Gastrocnemius medialis (tissue), 4 donors: ENCODE measurements at regions of chr10 and their contacts with region 1.

Region 1: DNA sequence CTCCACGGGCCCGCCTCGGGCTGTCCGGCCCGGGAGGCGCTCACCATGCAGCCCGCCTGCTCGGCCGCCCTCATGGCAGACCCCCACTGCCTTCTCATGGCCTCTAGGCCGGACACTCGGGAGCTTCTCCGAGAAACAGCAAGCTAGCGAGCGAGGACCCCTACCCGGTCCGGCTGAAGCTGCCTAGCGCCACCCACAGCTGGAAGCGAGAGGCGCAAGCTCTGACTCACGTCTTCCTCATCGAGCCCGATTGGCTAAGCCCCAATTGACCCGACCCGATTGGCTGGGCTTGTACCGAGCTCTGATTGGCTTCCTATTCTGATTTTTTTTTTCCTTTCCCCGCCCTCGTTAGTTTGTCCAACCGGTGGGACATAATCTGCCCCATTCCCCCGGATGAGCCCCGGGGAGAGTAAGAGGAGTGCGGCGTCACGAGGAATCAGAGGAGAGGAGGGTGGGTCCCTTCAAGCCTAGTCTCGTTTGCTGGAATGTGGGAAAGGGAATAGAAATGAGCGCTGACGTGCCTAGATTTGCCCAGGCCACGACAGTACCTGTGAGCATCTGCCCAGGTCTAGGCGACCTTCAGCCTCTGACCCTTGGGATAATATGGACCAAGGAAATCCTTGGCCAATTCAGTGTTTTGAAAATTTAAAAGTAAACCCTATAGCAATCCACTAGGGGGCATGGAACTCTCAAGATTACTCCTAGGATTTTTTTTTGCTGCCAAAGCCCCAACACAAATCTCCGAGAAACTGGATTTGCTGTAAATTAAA is at the start of gene TYSND1:
- DNase-seq: peak; percentile 97
- ATAC-seq: peak; percentile 98
- H3K4me3 ChIP-seq: peak within 1 kb of the TSS; percentile 69 to 86 (median 76)
- H3K27ac ChIP-seq: peak within 1 kb of the TSS; percentile 82 to 94 (median 87)
- H3K4me1 ChIP-seq: peaks cover 16 to 18% of the 10 kb centered on the region in 2 donors
- H3K27me3 ChIP-seq: no peaks in the 10 kb centered on the region
- CTCF ChIP-seq: peak; percentile 58 to 81 (median 68)
- POLR2A ChIP-seq: peak; percentile 56 to 70
- total RNA-seq, gene TYSND1: 2.7 to 10.3 (median 4.7) TPM

Region 2: GRCh38 chr10:70115948-70116682 is 30.6 kb before region 1 on chr10:
- in situ Hi-C with region 1: no loop called
- intact Hi-C with region 1: loop called (anchors 1 kb)
- DNase-seq: peak in 1 of 2 donors; percentile 60
- ATAC-seq: peak; percentile 56 to 77
- H3K4me3 ChIP-seq: no peak overlapping the region
- H3K27ac ChIP-seq: no peak overlapping the region
- H3K4me1 ChIP-seq: peaks cover 12 to 13% of the 10 kb centered on the region in 2 donors
- H3K27me3 ChIP-seq: no peaks in the 10 kb centered on the region
- CTCF ChIP-seq: peak; percentile 64 to 90 (median 85)
- POLR2A ChIP-seq: no peak

Region 3: GRCh38 chr10:70169649-70170364 is 23.1 kb after region 1 on chr10:
- in situ Hi-C with region 1: no loop called
- intact Hi-C with region 1: loop called (anchors 1 kb)
- DNase-seq: no peak
- ATAC-seq: peak; percentile 58 to 60
- H3K4me3 ChIP-seq: peak overlapping the region; percentile 92 to 98 (median 94)
- H3K27ac ChIP-seq: peak overlapping the region; percentile 92 to 98 (median 95)
- H3K4me1 ChIP-seq: peaks cover 25 to 37% of the 10 kb centered on the region in 2 donors
- H3K27me3 ChIP-seq: no peaks in the 10 kb centered on the region
- CTCF ChIP-seq: no peak
- POLR2A ChIP-seq: no peak

Region 4: GRCh38 chr10:70233109-70233938 is 86.7 kb after region 1 on chr10 and contains the start of gene PPA1:
- in situ Hi-C with region 1: no loop called
- intact Hi-C with region 1: loop called (anchors 5 kb)
- DNase-seq: peak; percentile 97 to 98
- ATAC-seq: peak; percentile 88 to 90
- H3K4me3 ChIP-seq: peak within 1 kb of the TSS; percentile 66 to 92 (median 86)
- H3K27ac ChIP-seq: peak within 1 kb of the TSS; percentile 83 to 92 (median 90)
- H3K4me1 ChIP-seq: peaks cover 12 to 16% of the 10 kb centered on the region in 2 donors
- H3K27me3 ChIP-seq: no peaks in the 10 kb centered on the region
- CTCF ChIP-seq: peak in 3 of 5 experiments; percentile 12 to 46 (median 43)
- POLR2A ChIP-seq: peak; percentile 85 to 93
- total RNA-seq, gene PPA1: 73.9 to 146 (median 95.3) TPM